ENCODE measurements at regions of chr12 and their contacts with region 1.

Region 1: GRCh38 chr12:70603044-70603443 is 34.2 kb downstream of the PTPRB start:
- DNase-seq: no peak
- H3K4me3 ChIP-seq: peak overlapping the region in 1 of 59 donors; percentile 68
- H3K27ac ChIP-seq: peak overlapping the region in 1 of 59 donors; percentile 21
- H3K27me3 ChIP-seq: peaks cover 0 to 17% (median 0%) of the 10 kb centered on the region in 45 donors
- CTCF ChIP-seq: no peak

Region 2: DNA sequence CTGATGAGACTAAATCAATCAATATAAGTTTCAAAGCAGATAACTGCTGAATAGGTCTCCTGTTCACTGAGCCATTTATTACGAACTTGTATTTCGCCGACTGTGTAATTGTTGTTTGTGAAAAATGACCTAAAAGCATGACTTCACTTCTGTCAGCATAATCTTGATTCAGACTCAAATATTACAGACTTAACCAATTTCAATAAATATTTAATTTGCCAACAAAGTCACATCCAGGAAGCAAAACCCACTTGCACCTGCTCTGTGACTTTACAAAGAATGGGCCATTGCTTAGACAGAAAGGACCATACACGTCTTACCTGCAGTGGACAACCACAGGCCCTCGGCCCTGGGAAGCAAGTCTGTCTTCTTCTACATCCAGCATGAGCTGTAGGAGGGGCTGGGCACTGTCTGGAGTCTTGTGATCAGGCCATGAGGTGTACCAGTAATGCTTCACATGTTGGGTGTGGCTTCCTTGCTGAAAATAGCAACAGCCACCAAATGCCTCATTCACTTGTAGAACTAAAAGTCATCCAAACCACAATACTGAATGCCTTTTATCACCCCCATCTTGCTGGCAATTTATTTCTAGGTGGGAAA is 57.7 kb after region 1 on chr12:
- intact Hi-C with region 1: loop called in 1 of 2 experiments (anchors 5 kb)
- DNase-seq: no peak
- H3K4me3 ChIP-seq: no peak overlapping the region
- H3K27ac ChIP-seq: peak overlapping the region in 3 of 59 donors; percentile 5 to 56 (median 39)
- H3K27me3 ChIP-seq: no peaks in the 10 kb centered on the region
- CTCF ChIP-seq: no peak

Measured in dorsolateral prefrontal cortex (tissue), 120 donors.